ENCODE measurements at regions of chr6 and their contacts with region 1.

Region 1: DNA sequence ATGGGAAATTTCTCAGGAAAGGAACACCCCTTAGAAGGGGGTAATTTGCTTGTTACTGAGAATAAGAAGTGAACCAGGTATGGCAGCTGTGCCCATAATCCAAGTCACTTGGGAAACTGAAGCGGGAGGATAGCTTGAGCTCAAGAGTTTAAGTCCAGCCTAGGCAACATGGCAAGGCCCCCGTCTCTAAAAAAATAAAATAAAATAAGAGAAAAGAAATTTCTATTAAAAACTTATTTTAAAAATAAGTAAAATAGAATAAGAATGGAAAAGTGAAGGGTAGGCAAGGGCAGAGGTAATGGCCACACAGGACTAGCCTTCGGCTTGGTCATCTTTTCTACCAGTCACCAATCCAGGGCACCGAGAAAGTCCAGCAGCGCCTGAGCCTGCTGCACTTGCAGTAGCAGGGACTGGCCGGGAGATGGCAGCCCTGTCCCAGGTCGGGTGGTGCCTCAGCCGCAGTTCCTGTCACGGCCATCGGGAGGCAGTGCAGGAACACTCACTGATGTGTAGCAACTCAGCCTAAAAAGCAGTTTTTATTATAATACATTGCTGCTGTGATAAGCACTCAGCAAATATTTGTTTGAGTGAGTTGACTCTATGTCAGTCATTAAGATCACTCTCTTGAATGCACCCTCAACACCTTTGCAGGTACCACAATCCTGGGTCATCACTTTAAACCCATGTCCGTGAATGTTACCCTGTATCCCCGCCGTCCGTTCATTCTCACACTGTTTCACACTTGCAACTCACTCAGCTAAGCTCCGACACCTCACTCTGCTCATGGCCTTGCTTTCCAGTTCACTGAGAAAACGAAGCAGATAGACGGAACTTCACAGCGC is 23.2 kb upstream of the GCM1 start:
- DNase-seq: peak; percentile 93
- H3K4me3 Mint-ChIP-seq: no peak overlapping the region
- H3K27ac Mint-ChIP-seq: no peak overlapping the region
- H3K4me1 Mint-ChIP-seq: no peaks in the 10 kb centered on the region
- H3K27me3 Mint-ChIP-seq: no peaks in the 10 kb centered on the region

Region 2: DNA sequence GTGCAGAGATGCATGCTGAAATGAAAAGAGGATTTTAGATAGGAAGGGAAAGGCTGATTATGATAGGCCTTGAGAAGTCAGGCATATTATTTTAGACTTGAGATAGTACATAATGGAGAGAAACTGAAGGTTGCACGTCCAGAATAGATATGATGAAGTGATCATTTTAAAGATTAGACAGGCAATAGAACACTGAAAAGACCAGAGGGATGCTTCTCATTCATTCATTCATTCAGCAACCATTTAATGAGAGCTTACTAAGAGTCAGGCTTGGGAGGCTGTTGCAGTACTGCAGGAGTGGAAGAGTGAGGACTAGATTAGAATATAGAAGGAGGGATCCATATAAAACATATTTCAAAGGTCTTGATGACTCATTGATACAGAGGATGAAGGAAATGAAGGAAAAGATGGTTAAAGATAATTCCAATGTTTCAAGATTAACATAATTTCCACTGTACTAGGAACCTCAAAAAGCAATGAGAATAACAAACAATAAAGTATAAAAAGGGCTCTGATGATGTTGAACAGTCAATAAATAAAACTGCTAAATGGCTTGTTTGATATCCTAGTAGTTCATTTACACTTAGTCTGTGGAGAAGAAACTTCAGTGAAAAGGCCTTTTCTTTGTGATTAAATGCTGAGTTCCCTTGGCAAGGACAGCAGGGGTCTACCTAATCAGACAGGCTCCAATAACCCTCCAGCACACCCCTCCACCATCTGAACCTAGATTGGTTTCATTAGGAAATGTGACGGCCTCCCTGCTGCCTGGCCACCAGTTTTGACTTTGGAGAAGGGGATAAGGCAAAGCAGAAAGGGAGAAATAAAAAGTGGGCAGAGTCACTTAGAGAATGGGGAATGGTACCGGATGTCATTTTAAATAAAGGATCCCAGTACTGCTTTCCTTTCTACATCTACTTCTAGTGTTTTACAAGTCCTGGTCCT is 111.9 kb before region 1 on chr6:
- CTCF ChIA-PET with region 1: no interaction called
- intact Hi-C with region 1: no loop called
- DNase-seq: no peak
- H3K4me3 Mint-ChIP-seq: peak overlapping the region; percentile 91
- H3K27ac Mint-ChIP-seq: no peak overlapping the region
- H3K4me1 Mint-ChIP-seq: peaks cover 55% of the 10 kb centered on the region
- H3K27me3 Mint-ChIP-seq: no peaks in the 10 kb centered on the region

Region 3: DNA sequence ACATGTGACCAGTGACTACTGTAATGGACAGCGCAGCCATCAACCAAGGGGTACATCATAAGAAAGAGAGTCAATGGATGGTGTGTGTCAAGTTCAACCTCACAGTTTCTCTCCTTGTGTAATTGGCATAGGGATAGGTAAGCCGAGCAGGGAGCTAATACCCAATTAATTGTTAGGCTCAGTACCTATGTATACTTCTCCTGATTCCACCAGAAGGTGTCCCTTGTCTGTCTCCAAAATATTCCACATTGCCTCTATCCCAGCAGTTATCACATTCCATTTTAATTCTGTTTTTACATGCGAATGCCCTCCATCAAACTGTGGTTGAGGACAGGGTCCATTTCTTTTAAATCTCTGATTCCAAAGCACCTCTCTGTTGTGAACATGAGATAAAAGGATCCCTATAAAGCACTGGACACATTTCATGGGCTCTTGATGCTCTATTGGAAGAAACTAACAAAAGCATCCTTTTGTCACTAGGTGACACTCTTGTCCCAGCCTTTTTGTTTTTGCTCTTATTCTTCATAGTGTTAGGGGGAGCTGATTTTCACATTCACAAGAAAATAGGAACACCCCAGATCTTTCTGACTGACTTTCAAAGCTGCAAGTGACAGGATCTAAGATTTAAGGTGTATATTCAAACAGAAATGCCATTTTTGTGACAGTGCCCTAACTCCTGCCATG is 67.7 kb before region 1 on chr6:
- CTCF ChIA-PET with region 1: no interaction called
- intact Hi-C with region 1: loop called (anchors 1 kb)
- DNase-seq: no peak
- H3K4me3 Mint-ChIP-seq: no peak overlapping the region
- H3K27ac Mint-ChIP-seq: no peak overlapping the region
- H3K4me1 Mint-ChIP-seq: no peaks in the 10 kb centered on the region
- H3K27me3 Mint-ChIP-seq: no peaks in the 10 kb centered on the region

Region 4: GRCh38 chr6:53410508-53411258 is 238.9 kb after region 1 on chr6:
- CTCF ChIA-PET with region 1: interaction called, 93 read pairs
- intact Hi-C with region 1: loop called (anchors 1 kb)
- DNase-seq: peak; percentile 70
- H3K4me3 Mint-ChIP-seq: no peak overlapping the region
- H3K27ac Mint-ChIP-seq: no peak overlapping the region
- H3K4me1 Mint-ChIP-seq: no peaks in the 10 kb centered on the region
- H3K27me3 Mint-ChIP-seq: no peaks in the 10 kb centered on the region

Region 5: DNA sequence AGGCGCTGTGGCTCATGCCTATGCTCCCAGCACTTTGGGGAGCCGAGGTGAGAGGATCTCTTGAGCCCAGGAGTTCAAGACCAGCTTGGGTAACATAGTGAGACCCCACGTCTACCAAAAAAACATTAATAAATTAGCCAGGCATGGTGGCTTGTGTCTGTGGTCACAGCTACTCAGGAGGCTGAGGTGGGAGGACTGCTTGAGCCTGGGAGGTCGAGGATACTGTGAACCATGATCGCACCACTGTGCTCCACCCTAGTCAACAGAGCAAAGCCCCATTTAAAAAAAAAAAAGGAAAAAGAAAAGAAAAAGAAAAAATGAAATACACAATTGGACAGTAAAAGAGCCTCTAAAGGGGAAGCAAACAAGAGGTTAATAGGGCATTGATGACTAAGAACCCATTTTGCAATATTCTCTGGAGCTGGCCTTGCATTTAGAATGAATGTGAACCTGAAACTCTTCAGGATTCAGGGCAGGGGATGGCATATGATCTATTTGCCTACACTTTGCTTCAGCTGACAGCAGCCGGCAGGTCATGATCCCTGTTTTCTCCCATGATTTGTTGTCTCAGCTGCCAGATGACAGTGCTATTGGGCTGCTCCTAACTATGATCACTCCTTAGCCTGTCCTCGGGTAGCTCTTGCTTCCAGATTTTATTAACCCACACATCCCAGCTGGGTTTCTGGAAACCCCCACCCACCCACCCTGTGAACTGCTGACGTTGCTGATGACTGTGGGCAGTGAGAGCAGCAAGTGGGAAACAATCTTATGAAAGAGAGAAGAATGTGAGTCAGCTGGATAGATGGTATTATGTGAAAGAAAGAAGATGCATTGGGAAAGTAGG is 260.7 kb after region 1 on chr6:
- CTCF ChIA-PET with region 1: interaction called, 15 read pairs
- intact Hi-C with region 1: loop called (anchors 1 kb)
- DNase-seq: no peak
- H3K4me3 Mint-ChIP-seq: no peak overlapping the region
- H3K27ac Mint-ChIP-seq: no peak overlapping the region
- H3K4me1 Mint-ChIP-seq: peaks cover 43% of the 10 kb centered on the region
- H3K27me3 Mint-ChIP-seq: peaks cover 4% of the 10 kb centered on the region

Region 6: GRCh38 chr6:53437557-53438202 is 265.9 kb after region 1 on chr6:
- CTCF ChIA-PET with region 1: interaction called, 15 read pairs
- intact Hi-C with region 1: loop called (anchors 1 kb)
- DNase-seq: peak; percentile 48
- H3K4me3 Mint-ChIP-seq: no peak overlapping the region
- H3K27ac Mint-ChIP-seq: no peak overlapping the region
- H3K4me1 Mint-ChIP-seq: peaks cover 21% of the 10 kb centered on the region
- H3K27me3 Mint-ChIP-seq: peaks cover 3% of the 10 kb centered on the region

Region 7: DNA sequence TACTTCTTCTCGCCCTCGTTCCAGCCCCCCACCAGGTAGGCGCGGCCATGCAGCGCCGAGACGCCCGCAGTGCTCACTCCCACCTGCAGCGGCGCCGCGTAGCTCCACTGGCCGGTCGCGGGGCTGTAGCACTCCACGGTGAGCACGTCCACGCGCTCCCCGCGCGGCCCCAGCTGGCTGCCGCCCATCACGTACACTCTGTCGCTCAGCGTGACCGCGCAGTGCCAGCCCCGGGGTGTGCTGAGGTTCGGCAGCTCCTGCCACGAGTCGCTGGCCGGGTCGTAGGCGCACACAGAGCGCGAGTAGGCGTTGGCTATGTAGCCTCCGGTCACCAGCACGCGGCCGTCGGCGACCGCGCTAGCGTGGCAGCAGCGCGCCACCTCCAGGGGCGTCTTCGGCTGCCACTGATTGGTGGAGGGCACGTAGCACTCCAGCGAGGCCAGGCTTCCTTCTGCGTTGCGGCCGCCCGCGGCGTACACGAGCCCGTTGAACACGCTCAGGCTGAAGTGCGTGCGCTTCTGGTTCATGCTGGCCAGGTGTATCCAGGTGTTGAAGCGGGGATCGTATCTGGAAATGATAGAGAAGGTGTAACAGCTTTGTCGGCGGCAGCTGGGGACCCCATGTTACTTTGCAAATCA is 480.1 kb after region 1 on chr6:
- CTCF ChIA-PET with region 1: no interaction called
- intact Hi-C with region 1: loop called (anchors 1 kb)
- DNase-seq: peak; percentile 81
- H3K4me3 Mint-ChIP-seq: peak overlapping the region; percentile 85
- H3K27ac Mint-ChIP-seq: peak overlapping the region; percentile 46
- H3K4me1 Mint-ChIP-seq: peaks cover 26% of the 10 kb centered on the region
- H3K27me3 Mint-ChIP-seq: no peaks in the 10 kb centered on the region